ENCODE measurements at regions of chr10 and their contacts with region 1.

Region 1: GRCh38 chr10:61903221-61903927 is 1.9 kb downstream of the ARID5B start:
- DNase-seq: peak; percentile 78
- ATAC-seq: peak; percentile 30
- H3K4me3 ChIP-seq: peak overlapping the region; percentile 75
- H3K27ac ChIP-seq: peak overlapping the region; percentile 52
- H3K4me1 ChIP-seq: peaks cover 30% of the 10 kb centered on the region
- H3K27me3 ChIP-seq: no peaks in the 10 kb centered on the region
- CTCF ChIP-seq: peak; percentile 66

Region 2: DNA sequence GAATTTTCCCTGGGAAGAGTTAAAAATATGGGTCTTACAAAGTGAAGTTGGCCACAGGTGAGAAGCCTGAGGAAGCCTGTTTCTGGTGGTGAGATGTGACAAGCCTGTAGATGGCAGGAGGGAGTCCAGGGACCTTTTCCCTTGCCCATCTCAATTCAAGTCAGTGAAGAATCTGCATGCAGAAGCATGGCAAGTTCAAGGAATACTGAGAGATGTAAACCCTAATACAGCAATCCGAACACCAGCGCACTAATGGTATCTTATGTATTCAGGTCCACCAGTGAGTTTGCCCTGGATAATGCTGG is 1033.0 kb before region 1 on chr10:
- CTCF ChIA-PET with region 1: no interaction called
- POLR2A ChIA-PET with region 1: no interaction called
- intact Hi-C with region 1: no loop called
- DNase-seq: peak; percentile 42
- ATAC-seq: peak; percentile 75
- H3K4me3 ChIP-seq: no peak overlapping the region
- H3K27ac ChIP-seq: no peak overlapping the region
- H3K4me1 ChIP-seq: no peaks in the 10 kb centered on the region; the same call in 1 of the 2 replicates
- H3K27me3 ChIP-seq: no peaks in the 10 kb centered on the region
- CTCF ChIP-seq: peak; percentile 68

Region 3: DNA sequence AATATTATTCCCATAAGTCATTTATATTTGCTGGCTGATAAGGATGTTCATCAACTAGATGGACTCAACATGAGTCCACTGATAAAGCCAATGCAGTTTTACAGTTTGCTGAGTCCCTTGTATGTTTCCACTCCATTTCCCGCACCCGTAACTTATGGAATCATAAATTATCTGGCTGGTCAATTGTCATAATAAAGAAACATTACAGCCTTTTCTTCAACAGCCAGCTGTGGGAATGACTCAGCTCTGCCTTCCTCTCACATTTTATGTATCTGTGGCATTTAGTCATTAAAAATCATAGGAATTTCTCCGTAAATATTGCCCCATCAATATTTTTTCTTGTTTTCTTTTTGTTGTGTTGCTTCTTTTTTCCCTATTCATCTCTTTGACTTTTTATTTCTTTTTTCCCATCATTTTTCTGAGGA is 427.9 kb before region 1 on chr10:
- CTCF ChIA-PET with region 1: no interaction called
- POLR2A ChIA-PET with region 1: no interaction called
- intact Hi-C with region 1: loop called (anchors 5 kb)
- DNase-seq: peak; percentile 98
- ATAC-seq: peak; percentile 41
- H3K4me3 ChIP-seq: no peak overlapping the region
- H3K27ac ChIP-seq: no peak overlapping the region
- H3K4me1 ChIP-seq: peaks cover 36% of the 10 kb centered on the region
- H3K27me3 ChIP-seq: no peaks in the 10 kb centered on the region
- CTCF ChIP-seq: no peak

Region 4: DNA sequence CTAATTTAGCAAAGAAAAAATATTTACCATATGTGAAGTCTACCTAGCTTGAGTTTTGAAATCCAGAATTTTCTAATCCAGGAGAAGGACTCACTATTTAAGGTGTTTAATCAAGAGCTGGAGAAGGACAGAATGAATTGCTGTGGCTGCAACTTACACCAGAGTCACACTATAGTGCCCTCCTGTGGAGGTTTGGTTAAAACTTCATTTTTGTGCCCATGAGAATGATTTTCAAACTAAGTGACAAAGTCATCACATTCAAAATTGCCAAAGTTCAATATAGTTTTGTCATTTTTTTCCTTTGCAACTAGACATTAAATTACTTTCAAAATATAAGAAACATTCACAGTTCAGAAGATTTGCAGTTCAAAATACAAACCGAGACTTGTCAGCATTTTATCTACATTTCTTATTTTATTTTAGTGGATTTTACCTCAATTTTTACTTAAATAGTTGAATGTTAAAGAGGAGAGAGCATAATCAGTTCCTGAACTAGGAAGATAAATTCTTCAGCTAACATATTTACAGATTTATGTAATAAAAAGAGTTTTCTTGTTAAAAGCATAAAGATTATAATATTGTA is 169.9 kb before region 1 on chr10:
- CTCF ChIA-PET with region 1: interaction called, 5 read pairs
- POLR2A ChIA-PET with region 1: no interaction called
- intact Hi-C with region 1: loop called (anchors 1 kb)
- DNase-seq: peak; percentile 96
- ATAC-seq: peak; percentile 88
- H3K4me3 ChIP-seq: no peak overlapping the region
- H3K27ac ChIP-seq: no peak overlapping the region
- H3K4me1 ChIP-seq: no peaks in the 10 kb centered on the region
- H3K27me3 ChIP-seq: 0 out of 2 replicates have a peak, but pooled peaks cover 7% of the 10 kb centered on the region
- CTCF ChIP-seq: peak; percentile 100

Region 5: DNA sequence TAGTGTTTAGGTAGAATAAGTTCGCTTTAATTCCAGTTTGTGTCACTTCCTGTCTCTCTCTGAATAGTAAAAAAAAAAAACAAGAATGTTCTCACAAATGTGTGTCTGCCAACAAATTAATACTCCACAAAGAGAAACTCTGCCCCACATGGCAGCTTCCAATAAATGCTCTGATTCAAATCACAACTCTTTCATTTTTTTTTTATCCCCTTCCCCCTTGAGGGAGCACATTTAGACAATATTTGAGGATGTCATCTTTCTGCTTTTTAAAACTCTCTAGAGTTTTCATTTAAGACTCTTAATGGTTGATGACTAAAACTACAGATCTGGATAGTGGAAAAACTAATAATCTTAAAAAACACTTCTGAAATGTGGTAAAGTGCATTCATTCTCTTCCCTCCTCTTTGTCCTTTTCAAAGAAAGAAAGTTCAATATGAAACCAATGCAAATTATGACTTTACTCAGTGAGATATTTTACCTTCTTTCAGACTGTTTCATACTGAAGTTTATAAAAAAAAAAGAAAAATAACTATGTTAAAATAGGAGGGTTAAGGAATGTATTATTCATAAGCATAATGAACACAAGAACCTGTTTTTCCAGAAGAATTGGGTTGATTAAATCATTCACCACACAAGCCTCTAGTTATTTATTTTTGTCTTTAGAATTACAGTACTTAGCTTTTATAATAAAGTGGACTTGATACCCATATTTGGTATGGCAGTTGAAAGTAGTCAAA is 40.5 kb after region 1 on chr10:
- CTCF ChIA-PET with region 1: interaction called, 17 read pairs
- POLR2A ChIA-PET with region 1: interaction called, 19 read pairs
- intact Hi-C with region 1: loop called (anchors 1 kb)
- DNase-seq: peak; percentile 99
- ATAC-seq: peak; percentile 14
- H3K4me3 ChIP-seq: peak overlapping the region; percentile 31
- H3K27ac ChIP-seq: peak overlapping the region; percentile 72
- H3K4me1 ChIP-seq: peaks cover 65% of the 10 kb centered on the region
- H3K27me3 ChIP-seq: no peaks in the 10 kb centered on the region
- CTCF ChIP-seq: peak; percentile 73

Region 6: DNA sequence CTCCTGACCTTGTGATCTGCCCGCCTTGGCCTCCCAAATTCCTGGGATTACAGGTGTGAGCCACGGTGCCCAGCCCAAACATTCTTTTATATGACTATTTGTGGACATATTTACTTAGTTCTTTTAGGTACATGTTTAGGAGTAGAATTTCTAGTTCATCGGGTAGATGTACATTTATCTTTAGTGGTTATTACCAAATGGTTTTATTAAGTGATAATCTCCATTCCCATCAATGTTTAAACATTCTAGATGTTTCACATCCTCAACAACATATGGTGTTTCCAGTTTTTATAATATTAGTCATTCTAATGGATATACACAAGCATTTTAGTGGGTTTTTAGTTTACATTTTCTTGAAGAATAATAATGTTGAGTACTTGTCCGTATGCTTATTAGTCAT is 233.5 kb after region 1 on chr10:
- CTCF ChIA-PET with region 1: no interaction called
- POLR2A ChIA-PET with region 1: no interaction called
- intact Hi-C with region 1: loop called (anchors 5 kb)
- DNase-seq: peak; percentile 100
- ATAC-seq: peak; percentile 85
- H3K4me3 ChIP-seq: no peak overlapping the region
- H3K27ac ChIP-seq: peak overlapping the region; percentile 76
- H3K4me1 ChIP-seq: peaks cover 25% of the 10 kb centered on the region
- H3K27me3 ChIP-seq: no peaks in the 10 kb centered on the region
- CTCF ChIP-seq: no peak

Measured in PC-3 (cell line).